Ovary (tissue), 10 donors: ENCODE measurements at regions of chrX and their contacts with region 1.

Region 1: DNA sequence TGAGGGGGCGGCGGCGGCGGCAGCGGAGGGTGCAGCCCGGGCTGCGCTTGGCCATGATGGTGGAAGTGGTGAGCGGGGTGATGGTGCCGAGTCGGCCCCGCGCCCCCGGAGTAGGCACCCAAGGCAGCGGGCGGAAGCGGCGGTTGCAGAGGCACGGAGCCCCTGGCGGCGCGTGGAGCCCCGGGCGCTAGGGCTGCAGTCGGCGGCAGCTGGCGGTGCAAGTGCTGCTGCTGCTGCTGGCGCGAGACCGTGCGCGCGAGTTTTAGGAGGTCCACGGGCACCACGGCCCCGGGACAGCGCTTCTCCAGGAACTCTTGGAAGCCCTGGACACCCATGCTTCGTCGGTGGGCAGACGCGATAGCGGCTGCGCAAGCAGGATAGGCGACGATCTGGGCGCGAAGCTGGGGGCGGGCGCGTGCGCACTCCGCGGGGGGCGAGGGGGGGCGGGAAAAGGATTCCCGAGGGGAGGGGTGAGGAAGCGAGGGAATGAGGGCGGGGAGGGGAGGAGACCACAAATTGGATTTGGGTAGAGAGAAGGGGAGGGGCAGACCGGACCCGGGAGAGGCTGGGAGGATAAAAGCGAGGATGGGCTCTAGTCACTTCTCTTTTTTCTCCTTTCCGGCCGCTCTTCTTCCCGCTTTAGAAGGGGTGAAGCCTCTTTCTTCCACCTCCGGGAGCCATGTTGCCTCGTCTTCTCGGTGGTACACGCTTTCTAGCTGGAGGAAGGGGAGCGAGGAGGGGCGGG is at the start of gene FAM120C:
- DNase-seq: peak; percentile 71 to 80 (median 74)
- H3K4me3 ChIP-seq: peak within 1 kb of the TSS; percentile 43
- H3K27ac ChIP-seq: peak within 1 kb of the TSS; percentile 66 to 82
- H3K4me1 ChIP-seq: peaks cover 3% of the 10 kb centered on the region
- H3K27me3 ChIP-seq: no peaks in the 10 kb centered on the region
- CTCF ChIP-seq: no peak
- EP300 ChIP-seq: no peak
- POLR2A ChIP-seq: no peak
- total RNA-seq, gene FAM120C: 8.6 to 19.3 (median 16.0) TPM

Region 2: GRCh38 chrX:54570332-54570731 is 387.3 kb after region 1 on chrX:
- intact Hi-C with region 1: no loop called
- DNase-seq: no peak
- H3K4me3 ChIP-seq: no peak overlapping the region
- H3K27ac ChIP-seq: no peak overlapping the region
- H3K4me1 ChIP-seq: no peaks in the 10 kb centered on the region
- H3K27me3 ChIP-seq: no peaks in the 10 kb centered on the region
- CTCF ChIP-seq: no peak
- EP300 ChIP-seq: no peak
- POLR2A ChIP-seq: no peak

Region 3: GRCh38 chrX:54999717-55000598 is 816.9 kb after region 1 on chrX and contains the start of gene APEX2:
- intact Hi-C with region 1: loop called in 1 of 4 experiments (anchors 10 kb)
- DNase-seq: peak; percentile 86 to 92 (median 87)
- H3K4me3 ChIP-seq: peak within 1 kb of the TSS; percentile 52
- H3K27ac ChIP-seq: peak within 1 kb of the TSS; percentile 58 to 77
- H3K4me1 ChIP-seq: no peaks in the 10 kb centered on the region
- H3K27me3 ChIP-seq: no peaks in the 10 kb centered on the region
- CTCF ChIP-seq: no peak
- EP300 ChIP-seq: no peak
- POLR2A ChIP-seq: peak; percentile 74
- total RNA-seq, gene APEX2: 9.7 to 18.5 (median 12.2) TPM